ENCODE measurements at regions of chr5 and their contacts with region 1.

Region 1: DNA sequence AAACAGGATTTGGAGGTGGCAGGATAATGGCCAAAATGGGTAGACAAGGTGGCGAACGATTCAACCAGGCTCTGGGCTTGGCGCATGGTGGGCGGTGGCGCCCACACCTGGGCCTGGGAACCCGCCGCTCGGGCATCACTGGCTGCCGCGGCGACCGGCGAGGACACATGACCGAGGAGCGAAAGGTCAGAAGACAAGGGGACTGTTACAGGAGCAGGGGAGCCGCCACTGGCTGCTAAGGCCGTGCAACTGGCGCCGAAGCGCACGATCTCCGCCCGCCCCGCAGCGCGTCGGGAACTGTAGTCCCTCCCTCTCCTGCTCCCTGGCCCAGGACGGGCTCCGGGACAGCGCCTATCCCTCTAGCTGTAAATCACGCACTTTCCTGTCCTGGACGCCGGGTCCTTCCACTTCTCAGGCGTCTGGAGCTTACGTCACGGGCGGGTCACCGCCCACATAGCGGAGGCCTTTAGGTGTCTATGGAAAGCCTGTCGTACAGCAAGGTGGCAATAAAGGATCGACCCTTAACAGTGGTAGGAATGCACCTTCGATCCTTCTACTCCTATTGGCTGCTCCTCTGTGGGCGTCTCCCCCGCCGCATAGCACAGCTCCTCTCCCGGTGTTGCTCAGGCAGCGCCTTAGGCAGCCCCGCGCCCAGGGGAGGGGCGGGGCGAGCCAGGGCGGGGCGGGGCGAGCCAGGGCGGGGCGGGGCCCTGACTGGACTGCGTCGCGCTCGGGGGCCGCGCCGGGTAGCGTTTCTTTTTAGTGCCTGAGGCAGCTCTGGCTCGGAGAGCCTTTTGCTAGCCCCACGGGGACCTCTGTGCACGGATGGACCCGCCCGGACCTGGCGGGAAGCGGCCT is at the start of gene ICE1:
- DNase-seq: peak; percentile 99
- ATAC-seq: peak; percentile 99
- total RNA-seq, gene ICE1: 18.3 TPM

Region 2: DNA sequence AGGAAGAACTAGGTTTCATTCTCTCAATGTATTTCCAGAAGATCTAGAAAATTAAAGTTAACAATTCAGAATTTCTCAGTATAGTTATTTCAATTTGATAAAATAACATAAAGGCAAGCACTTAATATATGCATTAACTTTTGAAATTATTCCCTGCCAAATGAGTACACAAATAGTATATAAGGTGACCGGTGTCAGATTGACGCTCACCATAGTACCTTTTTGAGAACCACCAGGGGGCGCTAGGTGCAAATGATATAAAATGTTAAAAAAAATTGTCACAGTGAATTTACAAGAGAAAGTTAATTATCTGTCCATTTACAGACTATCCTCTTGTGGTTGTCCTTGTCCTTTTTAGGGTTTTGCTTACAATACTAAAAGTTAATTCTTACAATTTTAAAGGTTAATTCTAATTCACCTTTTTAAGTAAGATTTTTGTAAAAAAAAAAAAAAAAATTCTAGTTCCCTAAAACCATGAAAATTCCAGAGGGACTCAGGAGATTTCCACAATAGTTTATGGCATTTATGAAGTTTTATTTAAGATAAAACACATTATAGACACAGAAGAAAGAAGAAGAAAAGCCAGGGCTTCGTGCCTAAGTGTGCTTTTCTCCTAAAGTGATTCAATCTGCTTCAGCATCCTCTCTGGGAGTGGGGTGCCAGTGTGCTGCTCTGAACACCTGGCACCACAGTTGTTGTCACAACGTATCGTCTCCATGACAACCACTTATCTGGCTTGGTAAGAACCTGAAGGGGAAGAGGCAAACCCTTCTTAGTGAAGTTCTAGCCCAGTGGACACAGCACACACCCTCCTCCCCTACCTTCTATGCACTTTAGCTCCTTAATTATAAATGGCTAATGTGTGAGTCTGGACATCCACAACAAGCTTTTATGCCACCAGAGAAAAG is 280.3 kb before region 1 on chr5:
- intact Hi-C with region 1: loop called (anchors 2 kb)
- DNase-seq: no peak
- ATAC-seq: no peak

Region 3: DNA sequence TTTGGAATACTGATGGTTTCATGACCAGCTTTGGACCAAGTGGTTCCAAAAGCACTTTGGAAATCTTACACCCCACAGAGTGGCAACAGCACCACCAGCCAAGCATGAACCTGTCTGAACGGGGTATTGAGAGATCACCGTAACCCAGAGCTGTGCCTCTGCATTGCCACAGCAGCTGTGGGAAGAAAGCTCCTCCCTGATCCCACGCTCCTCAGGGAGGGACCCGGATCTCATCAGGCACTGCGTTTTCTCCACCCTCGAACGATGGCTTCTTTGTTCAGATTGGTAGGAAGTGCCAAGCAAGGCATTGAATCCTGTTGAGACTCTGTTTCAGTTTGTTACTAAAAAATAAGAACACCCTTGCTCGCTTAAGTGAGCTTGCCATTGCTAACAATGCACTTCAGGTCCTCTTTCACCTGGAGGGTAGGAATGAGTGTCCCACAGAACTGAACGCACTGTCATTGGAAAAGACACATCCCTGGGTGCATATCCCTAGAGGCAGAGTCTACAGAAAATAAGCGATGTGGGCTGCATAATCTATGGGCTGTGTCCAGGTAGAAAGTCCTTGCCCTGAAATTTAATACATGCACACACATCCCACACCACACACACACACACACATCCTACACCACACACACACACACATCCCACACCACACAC is 117.7 kb before region 1 on chr5:
- intact Hi-C with region 1: no loop called
- DNase-seq: no peak
- ATAC-seq: no peak

Region 4: DNA sequence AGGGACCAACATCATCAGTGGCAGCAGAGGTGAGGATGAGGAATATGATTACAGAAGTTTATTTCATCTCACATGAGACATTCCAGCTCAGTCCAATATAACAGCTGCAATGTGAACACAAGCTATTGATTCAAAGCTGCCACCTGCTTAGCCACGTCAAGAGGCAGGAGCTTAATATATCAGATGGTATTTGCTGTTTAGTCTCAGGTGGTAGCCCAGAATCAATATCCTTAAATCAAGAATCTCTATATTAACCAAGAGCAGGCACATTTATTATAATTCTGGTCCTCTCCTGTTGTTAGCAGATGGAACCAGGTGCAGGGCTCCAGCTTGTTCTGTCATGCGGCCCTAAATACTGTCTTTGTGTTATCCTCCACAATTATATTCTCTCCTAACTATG is 431.9 kb after region 1 on chr5:
- intact Hi-C with region 1: no loop called
- DNase-seq: no peak
- ATAC-seq: no peak

Measured in Right ventricle myocardium inferior (tissue), 1 donor.